ENCODE measurements at regions of chr12 and their contacts with region 1.

Region 1: GRCh38 chr12:83142914-83143313 is 456.2 kb downstream of the TMTC2 start:
- DNase-seq: no peak
- H3K4me3 ChIP-seq: no peak overlapping the region
- H3K27ac ChIP-seq: no peak overlapping the region
- H3K4me1 ChIP-seq: no peaks in the 10 kb centered on the region
- H3K27me3 ChIP-seq: no peaks in the 10 kb centered on the region
- CTCF ChIP-seq: no peak

Region 2: GRCh38 chr12:83250866-83251265 is 108.0 kb after region 1 on chr12:
- CTCF ChIA-PET with region 1: no interaction called
- POLR2A ChIA-PET with region 1: interaction called, 20 read pairs
- intact Hi-C with region 1: no loop called
- DNase-seq: no peak
- H3K4me3 ChIP-seq: no peak overlapping the region
- H3K27ac ChIP-seq: no peak overlapping the region
- H3K4me1 ChIP-seq: no peaks in the 10 kb centered on the region
- H3K27me3 ChIP-seq: no peaks in the 10 kb centered on the region
- CTCF ChIP-seq: no peak